ENCODE measurements at regions of chr15 and their contacts with region 1.

Region 1: GRCh38 chr15:98568382-98569017 is 79.8 kb upstream of the IGF1R start:
- H3K4me3 ChIP-seq: no peak overlapping the region
- H3K27ac ChIP-seq: no peak overlapping the region
- H3K4me1 ChIP-seq: no peaks in the 10 kb centered on the region
- CTCF ChIP-seq: no peak

Region 2: DNA sequence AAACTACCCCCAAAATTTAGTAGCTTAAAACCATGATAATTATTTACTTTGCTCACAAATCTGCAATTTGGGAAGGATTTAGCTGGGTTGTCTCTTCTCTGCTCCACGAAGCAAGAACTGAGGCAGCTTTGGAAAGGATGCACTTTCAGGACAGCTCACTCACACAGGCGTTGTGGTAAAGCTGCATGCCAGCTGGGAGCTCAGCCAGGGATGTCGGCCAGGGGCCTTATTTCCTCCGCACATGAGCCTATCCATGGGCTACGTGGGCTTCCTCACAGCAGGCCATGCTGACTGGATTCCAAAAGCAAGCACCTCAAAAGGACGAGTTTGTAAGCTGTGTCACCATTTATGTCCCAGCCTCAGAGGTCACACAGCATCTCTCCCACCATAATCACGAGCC is 221.5 kb before region 1 on chr15:
- CTCF ChIA-PET with region 1: no interaction called
- POLR2A ChIA-PET with region 1: no interaction called
- H3K4me3 ChIP-seq: no peak overlapping the region
- H3K27ac ChIP-seq: no peak overlapping the region
- H3K4me1 ChIP-seq: no peaks in the 10 kb centered on the region
- CTCF ChIP-seq: no peak

Region 3: DNA sequence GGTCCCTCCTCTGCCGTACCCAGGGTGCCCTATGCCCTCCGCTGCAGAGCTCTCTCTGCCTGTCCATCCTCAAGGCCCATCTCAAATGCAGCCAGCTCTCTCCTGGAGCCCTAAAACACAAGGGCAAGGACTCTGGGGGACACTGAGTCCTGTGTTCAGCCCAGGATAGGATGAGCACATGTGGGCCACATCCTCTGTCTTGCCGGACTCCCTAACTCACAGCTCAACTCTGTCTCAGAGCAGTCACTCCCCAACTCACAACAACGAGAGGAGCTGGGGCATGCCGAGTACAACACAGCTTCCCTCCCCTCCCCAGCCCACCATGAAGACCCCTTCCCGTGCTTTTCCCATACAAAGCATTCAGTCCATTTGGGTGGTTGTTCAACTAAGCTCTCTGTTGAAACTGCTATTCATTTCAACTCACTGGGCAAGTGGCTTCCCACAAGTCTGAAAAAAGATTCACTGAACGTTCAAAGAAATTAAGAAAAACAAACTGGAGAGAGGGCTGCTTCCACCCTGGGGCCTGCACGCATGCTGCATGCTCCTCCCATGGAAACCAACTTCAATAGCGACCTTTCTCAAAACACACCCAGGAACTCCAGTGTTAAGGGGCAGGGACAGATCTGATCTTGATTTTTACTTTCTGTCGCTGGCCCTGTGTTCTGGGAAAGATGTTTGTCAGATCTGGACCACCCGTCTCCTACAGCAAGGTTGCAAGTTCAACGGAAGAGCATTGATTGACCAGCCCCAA is 44.4 kb before region 1 on chr15:
- CTCF ChIA-PET with region 1: interaction called, 11 read pairs
- POLR2A ChIA-PET with region 1: no interaction called
- H3K4me3 ChIP-seq: no peak overlapping the region
- H3K27ac ChIP-seq: no peak overlapping the region
- H3K4me1 ChIP-seq: no peaks in the 10 kb centered on the region; the same call in 1 of the 2 replicates
- CTCF ChIP-seq: no peak

Region 4: DNA sequence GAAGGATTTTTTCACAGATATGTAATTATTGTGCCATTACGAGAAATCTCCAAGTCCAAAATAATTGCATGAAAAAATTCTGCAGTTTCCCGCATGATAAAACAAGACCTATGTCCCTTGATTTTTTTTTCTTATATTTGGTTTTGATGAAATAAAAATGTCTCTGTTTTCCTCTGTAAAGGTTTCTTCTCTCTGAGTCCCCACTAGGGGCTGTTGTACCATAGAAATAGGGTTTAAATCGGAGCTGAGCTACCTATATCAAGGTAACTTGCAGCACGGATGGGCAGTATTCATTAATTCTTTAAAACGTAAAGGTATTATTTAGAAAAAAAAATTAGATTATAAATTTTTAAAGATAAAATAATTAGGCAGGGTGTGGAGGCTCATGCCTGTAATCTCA is 13.2 kb after region 1 on chr15:
- CTCF ChIA-PET with region 1: interaction called, 13 read pairs
- POLR2A ChIA-PET with region 1: no interaction called
- H3K4me3 ChIP-seq: no peak overlapping the region
- H3K27ac ChIP-seq: no peak overlapping the region
- H3K4me1 ChIP-seq: peaks cover 21% of the 10 kb centered on the region
- CTCF ChIP-seq: no peak